ENCODE measurements at regions of chr3 and their contacts with region 1.

Region 1: GRCh38 chr3:16300881-16301359 is 35.9 kb downstream of the OXNAD1 start:
- DNase-seq: peak; percentile 69
- H3K4me3 Mint-ChIP-seq: peak overlapping the region; percentile 74
- H3K27ac Mint-ChIP-seq: peak overlapping the region; percentile 94
- H3K4me1 Mint-ChIP-seq: peaks cover 89% of the 10 kb centered on the region
- H3K27me3 Mint-ChIP-seq: no peaks in the 10 kb centered on the region

Region 2: DNA sequence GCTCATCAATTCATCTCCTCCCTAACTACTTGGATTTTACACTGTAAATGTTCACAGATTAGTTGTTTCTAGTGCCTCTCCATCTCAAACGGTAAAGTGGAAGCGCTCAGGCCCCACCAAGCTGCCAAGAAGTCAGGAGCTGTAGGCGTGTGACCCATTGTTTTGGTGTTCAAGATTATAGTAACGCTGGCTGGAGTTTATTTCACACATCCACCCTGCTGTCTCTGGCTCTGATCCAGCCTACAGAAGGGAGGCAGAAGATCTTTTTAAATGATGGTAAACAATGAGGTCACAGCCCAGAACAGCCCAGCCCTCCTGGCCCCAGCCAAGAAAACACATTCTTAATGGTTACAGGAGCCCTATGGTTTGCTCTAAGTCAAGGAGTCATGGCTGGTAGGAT is 152.1 kb before region 1 on chr3:
- CTCF ChIA-PET with region 1: no interaction called
- POLR2A ChIA-PET with region 1: no interaction called
- DNase-seq: no peak
- H3K4me3 Mint-ChIP-seq: no peak overlapping the region
- H3K27ac Mint-ChIP-seq: no peak overlapping the region
- H3K4me1 Mint-ChIP-seq: peaks cover 15% of the 10 kb centered on the region
- H3K27me3 Mint-ChIP-seq: peaks cover 4% of the 10 kb centered on the region

Region 3: DNA sequence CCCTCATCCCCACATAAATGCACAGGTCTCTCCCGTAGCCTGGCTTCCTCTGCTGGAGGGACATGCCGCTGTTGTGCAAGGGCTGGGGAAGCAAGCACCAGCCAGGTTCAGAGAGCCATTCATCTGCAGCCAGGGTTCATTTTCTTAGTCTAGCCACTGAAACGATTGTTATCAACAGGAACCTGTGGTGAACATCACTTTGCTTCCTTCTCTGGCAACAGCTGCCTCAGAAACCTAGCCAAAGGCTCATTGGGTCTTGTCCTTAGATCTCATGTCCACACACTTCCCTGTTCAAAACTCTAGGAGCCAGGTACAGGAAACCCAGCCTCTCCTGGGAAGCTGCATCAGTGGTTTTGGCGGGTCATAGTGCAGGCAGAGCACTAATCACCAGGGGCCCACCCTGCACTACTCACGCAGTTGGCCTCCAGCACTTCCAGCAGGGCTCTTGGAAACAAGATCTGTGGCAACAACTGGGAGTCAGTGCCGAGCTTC is 11.1 kb after region 1 on chr3:
- CTCF ChIA-PET with region 1: interaction called, 20 read pairs
- POLR2A ChIA-PET with region 1: interaction called, 24 read pairs
- DNase-seq: peak; percentile 71
- H3K4me3 Mint-ChIP-seq: peak overlapping the region; percentile 54
- H3K27ac Mint-ChIP-seq: peak overlapping the region; percentile 87
- H3K4me1 Mint-ChIP-seq: peaks cover 87% of the 10 kb centered on the region
- H3K27me3 Mint-ChIP-seq: no peaks in the 10 kb centered on the region

Region 4: GRCh38 chr3:16319307-16319706 is 18.4 kb after region 1 on chr3:
- CTCF ChIA-PET with region 1: interaction called, 20 read pairs
- POLR2A ChIA-PET with region 1: interaction called, 24 read pairs
- DNase-seq: peak; percentile 85
- H3K4me3 Mint-ChIP-seq: no peak overlapping the region
- H3K27ac Mint-ChIP-seq: peak overlapping the region; percentile 72
- H3K4me1 Mint-ChIP-seq: peaks cover 58% of the 10 kb centered on the region
- H3K27me3 Mint-ChIP-seq: no peaks in the 10 kb centered on the region